Naive thymus-derived CD4-positive, alpha-beta T cell (primary cell): ENCODE measurements at regions of chr1 and their contacts with region 1.

Region 1: GRCh38 chr1:54542120-54542961 is 5.7 kb upstream of the ACOT11 start:
- DNase-seq: peak; percentile 26 to 72 (median 44)
- ATAC-seq: peak; percentile 90
- H3K4me3 ChIP-seq: peak overlapping the region; percentile 54
- H3K4me3 Mint-ChIP-seq: peak overlapping the region; percentile 66 to 87 (median 82)
- H3K27ac ChIP-seq: no peak overlapping the region
- H3K27ac Mint-ChIP-seq: peak overlapping the region in 6 of 9 donors; percentile 15 to 92 (median 58)
- H3K4me1 ChIP-seq: peaks cover 0 to 6% of the 10 kb centered on the region in 2 donors
- H3K4me1 Mint-ChIP-seq: peaks cover 12 to 22% (median 20%) of the 10 kb centered on the region in 7 donors
- H3K27me3 ChIP-seq: no peaks in the 10 kb centered on the region
- H3K27me3 Mint-ChIP-seq: peaks cover 0 to 27% (median 0%) of the 10 kb centered on the region in 5 donors

Region 2: DNA sequence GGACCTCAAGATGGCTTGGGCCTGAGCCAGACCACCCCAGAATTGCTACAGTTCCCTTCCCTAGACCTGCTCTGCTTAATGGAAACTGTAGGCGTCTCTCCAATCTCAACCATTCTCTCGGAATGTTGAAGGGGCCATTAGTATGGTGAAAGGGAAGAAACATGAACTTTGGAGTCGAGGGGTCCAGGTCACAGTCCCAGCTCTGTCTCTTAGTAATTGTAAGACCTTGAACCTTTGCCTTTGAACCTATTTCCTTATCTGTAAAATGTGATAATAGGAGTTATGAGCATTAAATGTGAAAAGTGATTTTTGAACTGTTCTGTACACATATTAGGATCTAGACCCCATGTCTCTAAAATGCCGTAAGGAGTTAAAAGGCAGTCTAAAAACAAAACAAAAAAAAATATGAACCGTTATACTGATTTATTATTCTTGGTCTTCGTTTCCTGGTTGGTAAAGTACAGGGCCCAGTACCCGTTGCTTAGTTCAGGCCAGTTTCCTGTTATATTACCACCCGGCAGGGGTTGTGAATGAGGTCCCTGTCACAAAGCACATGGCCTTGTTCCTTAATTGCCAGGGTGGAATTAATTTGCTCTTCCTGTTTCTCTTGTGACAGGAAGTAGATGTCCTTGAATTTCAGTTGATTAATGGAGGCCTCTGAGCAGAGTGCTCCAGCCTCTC is 446.7 kb before region 1 on chr1:
- CTCF ChIA-PET with region 1: no interaction called
- POLR2A ChIA-PET with region 1: no interaction called
- intact Hi-C with region 1: no loop called
- DNase-seq: no peak
- ATAC-seq: peak; percentile 76
- H3K4me3 ChIP-seq: no peak overlapping the region
- H3K4me3 Mint-ChIP-seq: no peak overlapping the region
- H3K27ac ChIP-seq: no peak overlapping the region
- H3K27ac Mint-ChIP-seq: peak overlapping the region in 2 of 9 donors; percentile 13 to 23
- H3K4me1 ChIP-seq: no peaks in the 10 kb centered on the region
- H3K4me1 Mint-ChIP-seq: peaks cover 0 to 11% (median 6%) of the 10 kb centered on the region in 7 donors
- H3K27me3 ChIP-seq: no peaks in the 10 kb centered on the region
- H3K27me3 Mint-ChIP-seq: no peaks in the 10 kb centered on the region

Region 3: GRCh38 chr1:54464482-54465146 is 77.7 kb before region 1 on chr1:
- CTCF ChIA-PET with region 1: no interaction called
- POLR2A ChIA-PET with region 1: no interaction called
- intact Hi-C with region 1: no loop called
- DNase-seq: no peak
- ATAC-seq: peak; percentile 23
- H3K4me3 ChIP-seq: no peak overlapping the region
- H3K4me3 Mint-ChIP-seq: no peak overlapping the region
- H3K27ac ChIP-seq: no peak overlapping the region
- H3K27ac Mint-ChIP-seq: peak overlapping the region in 2 of 9 donors; percentile 8 to 13
- H3K4me1 ChIP-seq: peaks cover 27 to 31% of the 10 kb centered on the region in 2 donors
- H3K4me1 Mint-ChIP-seq: peaks cover 8 to 51% (median 41%) of the 10 kb centered on the region in 7 donors
- H3K27me3 ChIP-seq: no peaks in the 10 kb centered on the region
- H3K27me3 Mint-ChIP-seq: peaks cover 0 to 4% (median 0%) of the 10 kb centered on the region in 5 donors

Region 4: GRCh38 chr1:54499360-54500106 is 42.8 kb before region 1 on chr1:
- CTCF ChIA-PET with region 1: no interaction called
- POLR2A ChIA-PET with region 1: no interaction called
- intact Hi-C with region 1: loop called in 1 of 2 experiments (anchors 2 kb)
- DNase-seq: peak in 6 of 9 donors; percentile 44 to 58 (median 50)
- ATAC-seq: peak; percentile 75
- H3K4me3 ChIP-seq: peak overlapping the region; percentile 48
- H3K4me3 Mint-ChIP-seq: peak overlapping the region; percentile 72 to 85 (median 78)
- H3K27ac ChIP-seq: no peak overlapping the region
- H3K27ac Mint-ChIP-seq: no peak overlapping the region
- H3K4me1 ChIP-seq: peaks cover 0 to 9% of the 10 kb centered on the region in 2 donors
- H3K4me1 Mint-ChIP-seq: peaks cover 4 to 11% (median 8%) of the 10 kb centered on the region in 7 donors
- H3K27me3 ChIP-seq: peaks cover 0 to 7% of the 10 kb centered on the region in 2 donors
- H3K27me3 Mint-ChIP-seq: peaks cover 27 to 67% (median 34%) of the 10 kb centered on the region in 5 donors